ENCODE measurements at regions of chr2 and their contacts with region 1.

Region 1: GRCh38 chr2:37672104-37672869 is 845 bp upstream of the CDC42EP3 start:
- DNase-seq: peak; percentile 34 to 82 (median 58)
- ATAC-seq: peak; percentile 46
- H3K4me3 ChIP-seq: peak overlapping the region; percentile 76
- H3K4me3 Mint-ChIP-seq: peak overlapping the region; percentile 91
- H3K27ac ChIP-seq: peak overlapping the region; percentile 59 to 64
- H3K27ac Mint-ChIP-seq: peak overlapping the region; percentile 86
- H3K4me1 ChIP-seq: peaks cover 30% of the 10 kb centered on the region
- H3K4me1 Mint-ChIP-seq: peaks cover 55% of the 10 kb centered on the region
- H3K27me3 ChIP-seq: no peaks in the 10 kb centered on the region
- H3K27me3 Mint-ChIP-seq: no peaks in the 10 kb centered on the region
- CTCF ChIP-seq: no peak

Region 2: DNA sequence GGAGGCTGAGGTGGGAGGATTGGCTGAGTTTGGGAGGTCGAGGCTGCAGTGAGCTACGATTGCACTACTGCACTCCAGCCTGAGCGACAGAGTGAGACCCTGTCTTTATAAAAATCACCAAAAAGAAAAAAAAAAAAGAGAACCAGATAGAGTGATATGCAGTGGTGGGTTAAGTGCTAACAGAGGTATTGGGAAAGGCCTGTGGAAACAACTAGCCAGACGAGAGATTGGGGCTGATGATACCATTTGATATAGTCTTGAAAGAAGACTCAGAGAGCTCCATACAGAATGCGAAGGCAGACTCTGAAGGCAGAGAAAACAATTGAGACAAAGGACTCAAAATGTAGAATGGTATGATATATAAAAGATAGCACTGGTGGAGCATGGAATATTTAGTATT is 135.0 kb before region 1 on chr2:
- CTCF ChIA-PET with region 1: interaction called, 3 read pairs
- POLR2A ChIA-PET with region 1: interaction called, 3 read pairs
- intact Hi-C with region 1: loop called in 1 of 2 experiments (anchors 5 kb)
- DNase-seq: no peak
- ATAC-seq: no peak
- H3K4me3 ChIP-seq: no peak overlapping the region
- H3K4me3 Mint-ChIP-seq: no peak overlapping the region
- H3K27ac ChIP-seq: no peak overlapping the region
- H3K27ac Mint-ChIP-seq: no peak overlapping the region
- H3K4me1 ChIP-seq: no peaks in the 10 kb centered on the region
- H3K4me1 Mint-ChIP-seq: peaks cover 10% of the 10 kb centered on the region
- H3K27me3 ChIP-seq: no peaks in the 10 kb centered on the region
- H3K27me3 Mint-ChIP-seq: no peaks in the 10 kb centered on the region
- CTCF ChIP-seq: no peak

Region 3: GRCh38 chr2:37600735-37601134 is 71.6 kb before region 1 on chr2:
- CTCF ChIA-PET with region 1: no interaction called
- POLR2A ChIA-PET with region 1: interaction called, 31 read pairs
- intact Hi-C with region 1: no loop called
- DNase-seq: peak in 2 of 14 experiments; percentile 51 to 54
- ATAC-seq: no peak
- H3K4me3 ChIP-seq: peak overlapping the region; percentile 65
- H3K4me3 Mint-ChIP-seq: peak overlapping the region; percentile 90
- H3K27ac ChIP-seq: peak overlapping the region; percentile 70 to 87
- H3K27ac Mint-ChIP-seq: peak overlapping the region; percentile 98
- H3K4me1 ChIP-seq: peaks cover 17% of the 10 kb centered on the region
- H3K4me1 Mint-ChIP-seq: peaks cover 52% of the 10 kb centered on the region
- H3K27me3 ChIP-seq: no peaks in the 10 kb centered on the region
- H3K27me3 Mint-ChIP-seq: no peaks in the 10 kb centered on the region
- CTCF ChIP-seq: no peak

Region 4: GRCh38 chr2:37648331-37649011 is 23.8 kb before region 1 on chr2:
- CTCF ChIA-PET with region 1: interaction called, 7 read pairs
- POLR2A ChIA-PET with region 1: interaction called, 43 read pairs
- intact Hi-C with region 1: loop called in 1 of 2 experiments (anchors 2 kb)
- DNase-seq: peak in 13 of 14 experiments; percentile 17 to 77 (median 43)
- ATAC-seq: peak; percentile 67
- H3K4me3 ChIP-seq: peak overlapping the region; percentile 4
- H3K4me3 Mint-ChIP-seq: peak overlapping the region; percentile 44
- H3K27ac ChIP-seq: peak overlapping the region; percentile 24 to 64
- H3K27ac Mint-ChIP-seq: peak overlapping the region; percentile 79
- H3K4me1 ChIP-seq: peaks cover 82% of the 10 kb centered on the region
- H3K4me1 Mint-ChIP-seq: peaks cover 91% of the 10 kb centered on the region
- H3K27me3 ChIP-seq: no peaks in the 10 kb centered on the region
- H3K27me3 Mint-ChIP-seq: no peaks in the 10 kb centered on the region
- CTCF ChIP-seq: peak; percentile 19

Region 5: DNA sequence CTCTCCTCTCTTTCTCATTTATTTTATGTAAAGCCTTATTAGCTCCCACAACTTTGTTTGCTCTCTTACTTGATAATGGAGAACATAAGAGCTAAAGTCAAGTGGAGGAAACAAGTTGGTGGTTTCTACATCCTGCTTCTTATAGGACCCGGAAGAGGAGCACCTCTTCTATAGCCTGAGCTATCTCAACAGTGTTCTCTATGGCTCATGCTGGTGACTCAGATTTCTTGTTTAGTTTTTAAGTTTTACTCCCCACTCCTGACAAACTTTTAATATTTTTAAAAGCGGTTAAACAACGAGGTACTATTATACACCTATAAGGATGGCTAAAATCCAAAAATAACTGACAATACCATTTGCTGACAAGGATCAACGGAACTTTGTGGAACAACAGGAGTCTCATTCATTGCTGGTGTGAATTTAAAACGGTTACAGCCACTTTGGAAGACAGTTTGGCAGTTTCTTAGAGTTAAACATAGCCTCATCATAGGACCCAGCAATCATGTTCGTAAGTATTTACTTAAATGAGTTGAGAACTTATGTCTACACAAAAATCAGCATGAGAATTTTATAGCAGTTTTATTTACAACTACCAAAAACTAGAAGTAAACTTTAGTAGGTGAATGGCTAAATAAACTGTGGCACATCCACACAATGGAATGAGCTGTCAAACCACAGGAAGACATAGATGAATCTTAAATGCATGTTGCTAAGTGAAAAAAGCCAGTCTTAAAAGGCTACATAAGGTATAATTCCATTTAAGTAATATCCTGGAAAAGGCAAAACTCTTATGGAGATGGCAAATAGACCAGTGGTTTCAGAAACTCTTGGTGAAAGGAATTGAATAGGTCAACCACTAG is 11.9 kb after region 1 on chr2:
- CTCF ChIA-PET with region 1: no interaction called
- POLR2A ChIA-PET with region 1: interaction called, 51 read pairs
- intact Hi-C with region 1: no loop called
- DNase-seq: peak in 4 of 14 experiments; percentile 41 to 78 (median 66)
- ATAC-seq: peak; percentile 100
- H3K4me3 ChIP-seq: no peak overlapping the region
- H3K4me3 Mint-ChIP-seq: peak overlapping the region; percentile 49
- H3K27ac ChIP-seq: peak overlapping the region in 1 of 2 donors; percentile 35
- H3K27ac Mint-ChIP-seq: peak overlapping the region; percentile 73
- H3K4me1 ChIP-seq: peaks cover 9% of the 10 kb centered on the region
- H3K4me1 Mint-ChIP-seq: peaks cover 33% of the 10 kb centered on the region
- H3K27me3 ChIP-seq: no peaks in the 10 kb centered on the region
- H3K27me3 Mint-ChIP-seq: no peaks in the 10 kb centered on the region
- CTCF ChIP-seq: no peak

Measured in CD4-positive, alpha-beta T cell (primary cell).